ENCODE measurements at regions of chr13 and their contacts with region 1.

Region 1: DNA sequence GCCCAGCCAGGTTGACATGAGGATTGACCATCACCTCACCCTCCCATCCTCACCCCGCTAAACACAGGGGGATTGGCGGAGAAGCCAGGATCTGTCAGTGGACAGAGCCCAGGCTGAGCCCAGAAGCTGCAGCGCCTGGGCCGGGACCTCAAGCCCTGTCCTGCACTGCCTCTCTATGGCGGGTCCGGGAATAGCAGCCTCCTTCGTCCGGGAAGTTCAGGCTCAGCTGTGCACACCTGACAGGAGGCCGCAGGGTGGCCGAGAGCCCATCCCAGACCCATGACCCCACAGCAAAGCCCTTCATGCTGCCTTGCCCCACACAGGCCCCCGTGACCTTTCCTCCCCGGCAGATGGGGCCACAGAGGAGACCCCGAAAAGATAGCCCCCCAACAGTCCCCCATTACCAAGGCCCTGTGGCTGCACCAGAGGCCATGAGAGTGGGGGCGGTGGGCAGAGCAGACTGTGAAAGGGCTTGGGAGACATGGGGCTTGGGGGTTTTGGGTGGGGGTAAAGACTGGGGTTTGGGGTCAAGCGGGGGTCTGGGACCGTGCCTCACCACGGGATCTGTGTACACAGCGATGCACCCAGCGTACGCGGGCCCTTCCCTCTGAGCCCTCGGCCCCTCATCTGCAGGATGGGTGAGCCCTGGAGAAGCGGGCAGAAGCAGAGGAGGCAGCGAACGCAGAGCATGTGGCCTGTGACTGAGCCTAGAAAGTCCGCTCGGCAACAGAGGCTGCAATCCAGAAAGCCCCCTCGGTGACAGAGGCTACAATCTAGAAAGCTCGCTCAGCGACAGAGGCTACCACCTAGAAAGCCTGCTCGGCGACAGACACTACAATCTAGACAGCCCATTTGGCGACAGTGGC is 68.1 kb downstream of the SPACA7 start:
- DNase-seq: peak; percentile 37 to 69 (median 52)
- ATAC-seq: peak in 3 of 4 donors; percentile 73 to 85 (median 84)
- H3K4me3 ChIP-seq: no peak overlapping the region
- H3K27ac ChIP-seq: no peak overlapping the region
- H3K4me1 ChIP-seq: peaks cover 0 to 8% (median 0%) of the 10 kb centered on the region in 12 donors
- H3K27me3 ChIP-seq: peaks cover 0 to 78% (median 26%) of the 10 kb centered on the region in 9 donors
- CTCF ChIP-seq: peak; percentile 68 to 90 (median 82)
- POLR2A ChIP-seq: no peak

Region 2: DNA sequence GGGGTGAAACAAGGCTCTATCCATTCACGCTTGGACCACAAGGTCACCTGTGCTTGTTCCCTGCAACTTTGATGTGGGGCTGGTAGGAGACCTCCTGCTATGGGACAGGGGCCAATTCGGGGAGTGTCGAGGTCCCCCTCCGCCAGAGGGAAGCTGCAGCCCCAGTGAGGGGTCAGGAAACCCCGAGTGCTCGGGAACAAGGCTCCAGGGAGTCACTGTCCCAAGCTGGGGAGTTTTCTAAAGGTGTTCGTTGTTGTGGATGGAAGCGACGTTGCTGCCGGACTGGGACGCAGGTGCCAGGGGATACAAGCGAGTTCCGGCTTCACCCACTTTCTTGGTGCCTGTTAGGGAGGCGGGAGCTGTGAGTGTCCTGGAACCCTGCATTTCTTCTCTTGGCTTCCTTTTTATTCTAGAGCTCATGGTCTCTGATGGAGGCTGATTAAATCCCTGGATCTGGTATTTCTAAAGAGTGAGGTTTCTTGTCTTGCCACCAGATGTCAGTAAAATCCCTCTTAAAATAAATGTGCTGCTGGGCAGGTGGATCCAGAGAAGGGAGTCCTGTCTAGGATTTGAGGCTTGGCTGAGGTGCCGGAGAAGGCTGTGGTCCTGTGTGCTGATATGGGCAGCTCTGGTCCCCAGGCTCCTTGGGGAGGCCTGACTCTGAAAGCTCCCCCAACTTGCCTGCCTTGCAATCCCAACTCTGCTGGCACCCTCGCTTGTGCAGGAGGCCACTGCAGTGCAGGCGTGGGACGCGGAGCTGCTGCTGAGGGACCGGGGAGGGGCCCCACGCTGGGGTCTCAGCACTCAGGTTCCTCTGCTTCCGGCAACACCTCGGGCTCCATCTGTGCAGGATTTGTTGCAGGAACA is 969.9 kb before region 1 on chr13:
- intact Hi-C with region 1: loop called (anchors 1 to 2 kb)
- DNase-seq: no peak
- ATAC-seq: peak in 3 of 4 donors; percentile 32 to 62 (median 48)
- H3K4me3 ChIP-seq: no peak overlapping the region
- H3K27ac ChIP-seq: no peak overlapping the region
- H3K4me1 ChIP-seq: no peaks in the 10 kb centered on the region
- H3K27me3 ChIP-seq: peaks cover 0 to 17% (median 3%) of the 10 kb centered on the region in 9 donors
- CTCF ChIP-seq: peak; percentile 32 to 69 (median 58)
- POLR2A ChIP-seq: no peak

Region 3: GRCh38 chr13:111531505-111531904 is 912.7 kb before region 1 on chr13:
- intact Hi-C with region 1: loop called in 4 of 10 experiments (anchors 1 to 5 kb)
- DNase-seq: no peak
- ATAC-seq: no peak
- H3K4me3 ChIP-seq: no peak overlapping the region
- H3K27ac ChIP-seq: no peak overlapping the region
- H3K4me1 ChIP-seq: peaks cover 0 to 5% (median 0%) of the 10 kb centered on the region in 12 donors
- H3K27me3 ChIP-seq: peaks cover 6 to 65% (median 34%) of the 10 kb centered on the region in 9 donors
- CTCF ChIP-seq: peak in 8 of 12 donors; percentile 12 to 47 (median 34)
- POLR2A ChIP-seq: no peak

Region 4: GRCh38 chr13:112066624-112067004 is 377.6 kb before region 1 on chr13:
- intact Hi-C with region 1: loop called in 1 of 10 experiments (anchors 10 kb)
- DNase-seq: peak in 4 of 5 donors; percentile 48 to 73 (median 58)
- ATAC-seq: peak in 3 of 4 donors; percentile 74 to 80 (median 77)
- H3K4me3 ChIP-seq: peak overlapping the region in 11 of 12 donors; percentile 16 to 48 (median 34)
- H3K27ac ChIP-seq: no peak overlapping the region
- H3K4me1 ChIP-seq: peaks cover 0 to 38% (median 7%) of the 10 kb centered on the region in 12 donors
- H3K27me3 ChIP-seq: peaks cover 71 to 95% (median 86%) of the 10 kb centered on the region in 9 donors
- CTCF ChIP-seq: no peak
- POLR2A ChIP-seq: no peak

Region 5: GRCh38 chr13:112606109-112607001 is 162.1 kb after region 1 on chr13:
- intact Hi-C with region 1: loop called in 2 of 10 experiments (anchors 5 to 10 kb)
- DNase-seq: peak; percentile 93 to 97 (median 95)
- ATAC-seq: peak; percentile 99 to 100 (median 100)
- H3K4me3 ChIP-seq: peak overlapping the region; percentile 13 to 63 (median 55)
- H3K27ac ChIP-seq: peak overlapping the region in 10 of 12 donors; percentile 11 to 78 (median 62)
- H3K4me1 ChIP-seq: peaks cover 0 to 12% (median 2%) of the 10 kb centered on the region in 12 donors
- H3K27me3 ChIP-seq: peaks cover 0 to 5% (median 0%) of the 10 kb centered on the region in 9 donors
- CTCF ChIP-seq: peak; percentile 92 to 99 (median 96)
- POLR2A ChIP-seq: peak in 1 of 2 donors; percentile 54

Region 6: DNA sequence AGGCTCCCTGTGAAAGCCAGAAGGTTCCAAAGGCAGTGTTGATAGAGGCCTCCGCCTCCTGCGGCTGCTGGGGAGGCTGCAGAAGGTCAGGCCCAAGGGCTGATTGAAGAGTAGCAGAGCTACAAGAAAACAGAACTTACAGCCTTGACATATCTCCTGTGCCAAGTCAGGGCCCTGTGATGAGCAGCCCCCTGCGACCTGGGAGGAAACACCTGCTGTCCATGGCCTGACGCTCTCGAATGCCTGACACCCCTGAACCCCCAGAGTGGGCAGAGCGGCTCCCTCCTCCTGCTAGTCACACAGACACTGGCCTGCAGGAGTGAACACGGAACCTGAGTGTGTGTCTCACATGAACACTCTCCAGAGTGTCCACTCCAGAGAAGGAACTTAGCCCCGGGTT is 181.9 kb after region 1 on chr13:
- intact Hi-C with region 1: no loop called
- DNase-seq: no peak
- ATAC-seq: peak in 1 of 4 donors; percentile 13
- H3K4me3 ChIP-seq: no peak overlapping the region
- H3K27ac ChIP-seq: no peak overlapping the region
- H3K4me1 ChIP-seq: no peaks in the 10 kb centered on the region
- H3K27me3 ChIP-seq: peaks cover 0 to 9% (median 0%) of the 10 kb centered on the region in 9 donors
- CTCF ChIP-seq: no peak
- POLR2A ChIP-seq: no peak